Ascending aorta (tissue), 2 donors: ENCODE measurements at regions of chr19 and their contacts with region 1.

Region 1: DNA sequence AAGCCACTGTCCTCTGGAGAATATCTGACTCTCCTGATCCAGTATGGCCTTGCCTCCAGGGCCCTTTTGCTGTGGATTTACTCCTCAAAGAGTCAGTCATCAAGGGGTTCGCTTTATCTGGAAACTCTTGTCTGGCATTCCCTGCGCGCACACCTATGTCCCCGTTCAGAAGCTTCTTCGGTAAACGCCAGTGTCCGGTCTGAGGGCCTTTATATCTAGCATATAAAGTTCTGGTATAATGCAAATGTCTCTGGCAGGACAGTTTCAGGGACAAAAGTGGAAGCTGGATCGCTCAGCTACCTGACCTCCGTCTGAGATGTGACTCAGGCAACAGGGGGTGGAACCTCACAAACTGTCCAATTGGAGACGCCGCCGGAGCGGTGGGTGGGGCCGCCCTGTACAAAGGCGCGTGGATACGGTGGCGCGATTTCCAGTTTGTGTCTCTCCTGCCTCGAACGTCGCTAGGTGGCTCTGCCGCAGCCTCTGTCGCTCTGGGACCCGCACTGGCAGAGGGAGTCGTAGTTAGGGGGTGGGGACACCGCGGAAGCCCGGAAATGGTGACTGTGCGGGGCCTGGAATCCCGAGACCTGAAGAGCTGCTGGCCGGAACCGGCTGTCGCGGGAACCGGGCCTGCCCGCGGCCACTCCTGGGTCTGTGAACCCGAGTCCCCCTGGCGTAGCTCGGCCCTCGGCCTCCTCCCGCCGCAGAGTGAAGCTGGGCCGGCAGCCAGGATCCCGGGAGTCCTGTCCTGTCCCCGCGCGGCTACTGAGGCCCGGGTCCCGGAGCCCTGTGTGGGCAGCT is 10.6 kb upstream of the ZNF709 start:
- DNase-seq: peak; percentile 88 to 98
- H3K4me3 ChIP-seq: peak overlapping the region; percentile 72 to 74
- H3K27ac ChIP-seq: peak overlapping the region; percentile 88 to 96
- H3K4me1 ChIP-seq: peaks cover 0 to 3% of the 10 kb centered on the region in 2 donors
- H3K27me3 ChIP-seq: no peaks in the 10 kb centered on the region
- CTCF ChIP-seq: peak in 2 of 3 experiments; percentile 34 to 55

Region 2: DNA sequence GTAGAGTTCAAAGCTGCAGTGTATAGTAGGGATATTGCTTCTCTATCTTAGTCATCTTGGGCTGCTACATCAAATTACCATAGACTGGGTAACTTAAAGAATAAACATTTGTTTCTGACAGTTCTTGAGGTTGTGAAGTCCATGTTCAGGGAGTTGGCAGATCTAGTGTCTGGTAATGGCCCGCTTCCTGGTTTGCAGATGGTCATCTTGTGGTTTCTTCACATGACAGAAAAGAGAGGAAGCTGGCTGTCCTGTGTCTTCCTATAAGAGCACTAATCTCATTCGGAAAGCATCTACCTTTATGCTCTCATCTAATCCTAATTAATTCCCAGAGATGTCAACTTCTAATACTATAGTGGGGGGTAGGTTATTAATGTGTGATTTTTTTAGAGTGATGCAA is 524.2 kb before region 1 on chr19:
- intact Hi-C with region 1: no loop called
- DNase-seq: no peak
- H3K4me3 ChIP-seq: no peak overlapping the region
- H3K27ac ChIP-seq: no peak overlapping the region
- H3K4me1 ChIP-seq: peaks cover 0 to 5% of the 10 kb centered on the region in 2 donors
- H3K27me3 ChIP-seq: no peaks in the 10 kb centered on the region
- CTCF ChIP-seq: no peak

Region 3: GRCh38 chr19:12294249-12295158 is 200.7 kb before region 1 on chr19 and contains the start of gene ZNF44:
- intact Hi-C with region 1: loop called (anchors 10 kb)
- DNase-seq: peak; percentile 97 to 99
- H3K4me3 ChIP-seq: peak within 1 kb of the TSS; percentile 76 to 80
- H3K27ac ChIP-seq: peak within 1 kb of the TSS; percentile 84
- H3K4me1 ChIP-seq: peaks cover 8 to 15% of the 10 kb centered on the region in 2 donors
- H3K27me3 ChIP-seq: no peaks in the 10 kb centered on the region
- CTCF ChIP-seq: no peak
- total RNA-seq, gene ZNF44: 10.4 TPM

Region 4: DNA sequence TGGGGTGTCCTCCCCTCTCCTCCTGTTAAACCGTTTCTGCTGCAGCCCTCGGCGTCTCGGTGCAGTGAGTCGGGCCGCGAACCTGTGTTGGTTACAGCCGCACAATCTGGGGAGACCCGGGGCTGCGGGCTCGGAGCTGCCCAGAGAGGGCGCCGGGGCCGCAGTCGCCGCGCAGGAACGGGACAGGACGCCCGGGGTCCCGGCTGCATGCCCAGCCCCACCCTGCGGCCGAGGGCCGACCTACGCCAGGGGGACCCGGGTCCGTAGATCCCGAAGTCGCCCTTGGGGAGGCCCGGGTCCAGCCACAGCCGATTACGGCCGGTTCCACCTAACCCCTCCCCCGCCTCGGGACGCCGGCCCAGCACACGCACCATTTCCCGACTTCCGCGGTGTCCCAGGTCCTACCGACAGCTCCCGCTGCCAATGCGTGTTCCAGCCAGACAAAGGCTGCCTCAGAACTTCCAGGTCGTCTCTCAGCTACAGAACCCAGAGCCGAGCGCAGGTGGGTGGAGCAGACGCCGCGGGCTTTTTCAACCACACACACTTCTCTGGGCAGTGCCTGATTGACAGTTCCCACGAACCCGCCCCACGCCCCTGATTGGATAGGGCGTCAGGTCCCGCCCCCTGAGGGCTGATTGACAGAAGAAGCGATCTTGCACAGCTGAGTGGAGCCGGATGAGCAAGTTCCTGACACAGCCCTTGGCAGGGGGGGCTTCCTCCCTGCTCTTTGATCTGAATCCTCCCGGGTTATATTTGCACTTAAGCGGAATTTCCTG is 54.5 kb before region 1 on chr19 and contains the start of gene ZNF443:
- intact Hi-C with region 1: loop called (anchors 2 kb)
- DNase-seq: peak; percentile 99
- H3K4me3 ChIP-seq: peak within 1 kb of the TSS; percentile 77 to 81
- H3K27ac ChIP-seq: peak within 1 kb of the TSS; percentile 80 to 81
- H3K4me1 ChIP-seq: no peaks in the 10 kb centered on the region
- H3K27me3 ChIP-seq: no peaks in the 10 kb centered on the region
- CTCF ChIP-seq: peak in 1 of 3 experiments; percentile 17
- total RNA-seq, gene ZNF443: 4.0 TPM

Region 5: DNA sequence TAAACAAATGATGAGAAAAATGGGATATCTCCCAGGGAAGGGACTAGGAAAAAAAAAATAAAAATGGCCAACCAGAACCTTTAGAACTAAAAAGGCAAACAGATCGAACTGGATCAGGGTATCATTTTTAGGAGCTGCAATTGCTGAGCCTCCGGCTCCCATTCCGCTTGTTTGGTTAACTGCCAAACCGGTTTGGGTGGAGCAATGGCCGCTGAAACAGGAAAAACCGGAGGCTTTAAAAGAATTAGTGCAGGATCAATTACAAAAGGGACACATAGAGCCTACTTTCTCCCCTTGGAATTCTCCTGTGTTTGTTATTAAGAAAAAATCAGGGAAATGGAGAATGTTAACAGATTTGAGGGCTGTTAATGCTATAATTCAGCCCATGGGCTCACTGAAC is 41.7 kb before region 1 on chr19:
- intact Hi-C with region 1: no loop called
- DNase-seq: no peak
- H3K4me3 ChIP-seq: no peak overlapping the region
- H3K27ac ChIP-seq: no peak overlapping the region
- H3K4me1 ChIP-seq: no peaks in the 10 kb centered on the region
- H3K27me3 ChIP-seq: no peaks in the 10 kb centered on the region
- CTCF ChIP-seq: no peak

Region 6: GRCh38 chr19:12521996-12522395 is 26.8 kb after region 1 on chr19:
- intact Hi-C with region 1: no loop called
- DNase-seq: no peak
- H3K4me3 ChIP-seq: no peak overlapping the region
- H3K27ac ChIP-seq: no peak overlapping the region
- H3K4me1 ChIP-seq: no peaks in the 10 kb centered on the region
- H3K27me3 ChIP-seq: no peaks in the 10 kb centered on the region
- CTCF ChIP-seq: no peak

Region 7: GRCh38 chr19:12551060-12551832 is 56.0 kb after region 1 on chr19 and contains the start of gene ZNF564:
- intact Hi-C with region 1: loop called (anchors 1 kb)
- DNase-seq: peak; percentile 93 to 98
- H3K4me3 ChIP-seq: peak within 1 kb of the TSS; percentile 86 to 96
- H3K27ac ChIP-seq: peak within 1 kb of the TSS; percentile 85 to 96
- H3K4me1 ChIP-seq: peaks cover 0 to 18% of the 10 kb centered on the region in 2 donors
- H3K27me3 ChIP-seq: no peaks in the 10 kb centered on the region
- CTCF ChIP-seq: no peak
- total RNA-seq, gene ZNF564: 2.6 TPM

Region 8: GRCh38 chr19:12666265-12667048 is 171.3 kb after region 1 on chr19 and contains the starts of genes MAN2B1 and WDR83:
- intact Hi-C with region 1: loop called (anchors 5 kb)
- DNase-seq: peak; percentile 25 to 89
- H3K4me3 ChIP-seq: peak within 1 kb of the TSS; percentile 71 to 81
- H3K27ac ChIP-seq: peak within 1 kb of the TSS; percentile 58 to 80
- H3K4me1 ChIP-seq: peaks cover 12 to 33% of the 10 kb centered on the region in 2 donors
- H3K27me3 ChIP-seq: no peaks in the 10 kb centered on the region
- CTCF ChIP-seq: no peak
- total RNA-seq, gene MAN2B1: 36.3 TPM
- total RNA-seq, gene WDR83: 12.0 TPM